ENCODE measurements at regions of chr12 and their contacts with region 1.

Region 1: DNA sequence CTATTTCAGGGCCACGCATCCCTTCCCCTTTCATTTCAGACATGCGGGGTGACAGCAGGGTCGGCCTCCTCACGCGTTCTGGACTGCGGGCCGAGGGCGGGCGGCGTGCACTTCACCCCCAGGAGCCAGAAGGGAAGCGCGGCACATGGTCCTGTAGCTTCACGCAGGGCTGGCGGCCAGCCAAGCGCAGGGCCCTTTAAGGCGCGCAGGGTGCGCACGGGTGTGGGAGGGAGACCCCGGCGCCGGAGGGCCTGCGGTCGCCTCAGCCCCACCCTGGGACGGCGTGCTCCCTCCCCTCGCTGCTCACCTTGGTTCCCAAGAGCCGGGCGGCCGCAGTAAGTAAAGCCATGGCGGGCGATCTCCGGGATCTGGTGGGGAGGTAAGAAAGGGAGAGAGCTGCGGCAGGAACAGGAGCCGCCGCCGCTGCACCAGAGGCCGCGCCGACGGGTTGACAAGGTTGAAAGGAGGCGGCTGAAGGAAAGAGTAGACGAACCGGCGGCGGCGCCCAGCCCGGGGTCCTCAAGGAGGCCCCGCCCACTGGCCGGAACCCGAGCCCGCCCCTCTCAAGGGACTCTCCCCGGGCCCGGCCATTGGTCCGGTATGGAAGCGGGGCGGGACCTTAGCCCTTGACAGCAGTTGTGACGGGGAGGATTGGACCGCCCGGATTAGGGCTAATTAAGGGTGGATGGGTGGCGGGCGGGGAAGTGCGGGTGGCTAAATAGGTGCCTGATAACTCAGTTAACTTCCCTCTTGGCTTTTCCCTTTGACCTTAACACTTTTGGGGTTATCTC is at the start of gene CS:
- DNase-seq: peak; percentile 99 to 100
- ATAC-seq: peak; percentile 99
- H3K4me3 ChIP-seq: peak within 1 kb of the TSS; percentile 66 to 71
- H3K27ac ChIP-seq: peak within 1 kb of the TSS; percentile 62 to 95
- H3K4me1 ChIP-seq: peaks cover 0 to 2% of the 10 kb centered on the region in 2 donors
- H3K27me3 ChIP-seq: no peaks in the 10 kb centered on the region
- total RNA-seq, gene CS: 103 to 104 TPM

Region 2: DNA sequence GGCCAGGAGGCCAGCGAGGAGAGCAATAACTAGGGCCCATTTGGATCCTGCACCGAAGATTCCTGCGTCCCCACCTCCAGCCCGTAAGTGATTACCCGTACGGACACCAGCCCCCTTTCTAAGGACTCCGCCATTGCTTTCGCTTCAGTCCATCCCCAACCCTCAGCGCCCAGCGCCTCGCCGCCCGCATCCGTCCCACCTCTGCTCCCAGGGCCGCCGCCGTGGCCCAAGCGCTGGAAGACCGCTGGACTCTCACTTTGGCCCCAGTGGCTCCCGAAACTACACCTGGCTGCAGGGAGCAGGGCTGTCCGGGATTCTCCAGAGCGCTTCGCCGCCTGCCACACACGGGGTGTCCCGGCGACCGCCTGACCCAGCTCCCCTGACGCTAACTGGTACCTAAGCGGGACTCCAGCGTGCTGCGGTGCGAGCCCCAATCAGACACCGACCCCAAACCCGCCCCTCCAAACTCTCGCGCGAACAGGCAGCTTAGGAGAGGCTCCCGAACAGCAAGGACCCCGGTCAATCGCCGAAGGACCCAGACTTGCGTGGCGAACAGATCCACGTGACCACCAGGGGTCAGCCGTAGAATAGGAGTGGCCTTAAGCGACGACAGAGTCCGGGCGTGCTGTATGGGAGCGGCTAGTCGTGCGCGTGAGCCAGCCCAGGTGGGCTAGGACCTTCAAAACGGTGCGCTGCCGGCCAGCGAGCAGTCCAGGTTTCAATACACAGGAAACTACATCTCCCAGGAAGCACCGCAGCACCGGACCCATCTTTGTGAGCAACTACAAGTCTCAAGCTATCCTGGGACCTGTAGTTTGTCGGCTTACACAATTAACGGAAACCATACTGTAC is 15.8 kb after region 1 on chr12 and contains the start of gene CNPY2:
- intact Hi-C with region 1: loop called in 1 of 2 experiments (anchors 2 kb)
- DNase-seq: peak; percentile 98
- ATAC-seq: peak; percentile 97
- H3K4me3 ChIP-seq: peak within 1 kb of the TSS; percentile 53 to 63
- H3K27ac ChIP-seq: peak within 1 kb of the TSS in 1 of 2 donors; percentile 30
- H3K4me1 ChIP-seq: no peaks in the 10 kb centered on the region
- H3K27me3 ChIP-seq: no peaks in the 10 kb centered on the region
- total RNA-seq, gene CNPY2: 72.2 to 92.0 TPM

Measured in aorta (tissue), 5 donors.